ENCODE measurements at regions of chr7 and their contacts with region 1.

Region 1: DNA sequence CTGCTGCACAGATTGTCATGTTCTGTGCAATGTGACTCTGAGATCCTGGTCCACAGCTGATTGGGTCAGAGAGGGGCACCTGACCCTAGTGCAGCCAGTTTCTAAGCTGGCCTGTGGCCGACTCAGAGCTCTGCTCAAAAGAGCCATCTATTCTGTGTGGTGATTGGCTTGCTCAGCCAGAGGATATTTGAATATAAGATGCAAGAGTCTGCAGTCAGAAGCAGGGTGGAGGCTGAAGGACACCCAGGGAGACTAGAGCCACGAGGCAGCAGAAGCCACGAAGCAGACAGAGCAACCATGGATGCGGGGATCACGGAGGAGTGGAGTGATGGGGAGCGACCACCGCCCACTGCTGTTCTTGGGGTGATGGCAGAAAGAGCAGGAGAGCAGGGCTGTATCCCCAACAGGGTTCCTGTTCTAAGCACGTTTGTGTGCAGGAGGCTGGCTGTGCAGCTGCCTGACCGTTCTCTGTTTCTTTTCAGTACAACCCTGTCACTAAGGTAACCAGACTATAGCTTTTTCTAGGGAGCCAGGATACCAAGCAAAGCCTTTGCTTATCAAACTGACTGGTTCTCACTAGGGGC is 19.5 kb upstream of the RHEB start:
- DNase-seq: no peak

Region 2: GRCh38 chr7:151623766-151624165 is 84.6 kb after region 1 on chr7:
- CTCF ChIA-PET with region 1: interaction called, 12 read pairs
- POLR2A ChIA-PET with region 1: no interaction called
- DNase-seq: no peak